ENCODE measurements at regions of chr12 and their contacts with region 1.

Region 1: GRCh38 chr12:1594261-1595025 is at the start of gene FBXL14:
- DNase-seq: peak; percentile 74
- H3K4me3 ChIP-seq: peak within 1 kb of the TSS; percentile 75 to 91 (median 77)
- H3K27ac ChIP-seq: peak within 1 kb of the TSS; percentile 71
- H3K4me1 ChIP-seq: peaks cover 40% of the 10 kb centered on the region
- H3K27me3 ChIP-seq: no peaks in the 10 kb centered on the region
- CTCF ChIP-seq: no peak
- POLR2A ChIP-seq: peak; percentile 72
- total RNA-seq, gene FBXL14: 10.2 and 11.3 TPM in 2 replicates

Region 2: GRCh38 chr12:1605129-1606020 is 10.9 kb after region 1 on chr12:
- CTCF ChIA-PET with region 1: interaction called, 41 read pairs
- POLR2A ChIA-PET with region 1: no interaction called
- dilution Hi-C with region 1: no loop called
- intact Hi-C with region 1: loop called (anchors 1 kb)
- DNase-seq: peak; percentile 81
- H3K4me3 ChIP-seq: peak overlapping the region in 2 of 3 experiments; percentile 27 to 28
- H3K27ac ChIP-seq: peak overlapping the region; percentile 39
- H3K4me1 ChIP-seq: peaks cover 9% of the 10 kb centered on the region
- H3K27me3 ChIP-seq: no peaks in the 10 kb centered on the region
- CTCF ChIP-seq: peak; percentile 73 to 85
- POLR2A ChIP-seq: no peak

Region 3: GRCh38 chr12:1880153-1880845 is 285.9 kb after region 1 on chr12:
- CTCF ChIA-PET with region 1: no interaction called
- POLR2A ChIA-PET with region 1: no interaction called
- dilution Hi-C with region 1: no loop called
- intact Hi-C with region 1: no loop called
- DNase-seq: no peak
- H3K4me3 ChIP-seq: no peak overlapping the region
- H3K27ac ChIP-seq: no peak overlapping the region
- H3K4me1 ChIP-seq: no peaks in the 10 kb centered on the region
- H3K27me3 ChIP-seq: no peaks in the 10 kb centered on the region
- CTCF ChIP-seq: no peak
- POLR2A ChIP-seq: no peak